Calu3 (cell line): ENCODE measurements at regions of chr13 and their contacts with region 1.

Region 1: GRCh38 chr13:48580185-48580803 is 47.4 kb upstream of the RCBTB2 start:
- DNase-seq: peak; percentile 60
- H3K4me3 Mint-ChIP-seq: no peak overlapping the region
- H3K27ac Mint-ChIP-seq: no peak overlapping the region
- H3K4me1 Mint-ChIP-seq: peaks cover 33% of the 10 kb centered on the region
- H3K27me3 Mint-ChIP-seq: no peaks in the 10 kb centered on the region
- CTCF ChIP-seq: peak; percentile 33

Region 2: GRCh38 chr13:48233046-48233907 is 347.0 kb before region 1 on chr13 and contains the start of gene ITM2B:
- CTCF ChIA-PET with region 1: interaction called, 4 read pairs
- intact Hi-C with region 1: loop called (anchors 10 kb)
- DNase-seq: peak; percentile 58
- H3K4me3 Mint-ChIP-seq: peak within 1 kb of the TSS; percentile 74
- H3K27ac Mint-ChIP-seq: peak within 1 kb of the TSS; percentile 84
- H3K4me1 Mint-ChIP-seq: peaks cover 38% of the 10 kb centered on the region
- H3K27me3 Mint-ChIP-seq: no peaks in the 10 kb centered on the region
- CTCF ChIP-seq: peak; percentile 22
- total RNA-seq, gene ITM2B: 357 and 362 TPM in 2 replicates

Region 3: DNA sequence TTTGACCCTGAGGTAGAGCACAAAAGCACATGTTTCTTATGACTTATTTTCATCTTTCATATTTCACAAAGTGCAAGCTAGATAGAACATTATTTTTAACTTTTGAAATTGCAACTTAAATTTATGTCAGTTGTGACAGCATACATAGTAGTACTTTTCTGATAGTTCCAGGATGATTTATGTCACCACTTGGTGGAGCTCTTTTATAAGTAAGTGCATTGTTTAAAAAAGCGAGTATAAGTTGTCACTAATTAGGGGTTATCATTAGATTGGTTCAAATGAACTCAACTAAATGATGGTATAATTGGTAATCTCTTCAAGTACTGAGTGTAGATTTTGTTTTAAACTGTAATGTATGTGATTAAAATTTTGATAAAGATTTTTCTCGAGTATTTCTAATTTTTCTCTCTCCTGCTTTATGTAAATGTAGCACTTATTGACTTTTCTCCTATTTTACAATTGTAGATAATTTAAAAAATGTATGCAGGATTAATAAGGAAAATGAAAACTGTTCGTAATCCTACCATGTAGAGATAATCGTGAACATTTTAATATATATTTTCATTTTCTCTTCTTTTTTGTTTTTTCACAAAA is 245.7 kb before region 1 on chr13:
- CTCF ChIA-PET with region 1: interaction called, 14 read pairs
- intact Hi-C with region 1: loop called (anchors 1 kb)
- DNase-seq: no peak
- H3K4me3 Mint-ChIP-seq: no peak overlapping the region
- H3K27ac Mint-ChIP-seq: no peak overlapping the region
- H3K4me1 Mint-ChIP-seq: peaks cover 15% of the 10 kb centered on the region
- H3K27me3 Mint-ChIP-seq: no peaks in the 10 kb centered on the region
- CTCF ChIP-seq: no peak

Region 4: GRCh38 chr13:48412881-48413351 is 167.4 kb before region 1 on chr13 and contains the start of gene LPAR6:
- CTCF ChIA-PET with region 1: no interaction called
- intact Hi-C with region 1: loop called (anchors 2 kb)
- DNase-seq: peak; percentile 22
- H3K4me3 Mint-ChIP-seq: peak within 1 kb of the TSS; percentile 75
- H3K27ac Mint-ChIP-seq: peak within 1 kb of the TSS; percentile 86
- H3K4me1 Mint-ChIP-seq: no peaks in the 10 kb centered on the region
- H3K27me3 Mint-ChIP-seq: no peaks in the 10 kb centered on the region
- CTCF ChIP-seq: no peak
- total RNA-seq, gene LPAR6: 16.4 TPM in 2 replicates

Region 5: DNA sequence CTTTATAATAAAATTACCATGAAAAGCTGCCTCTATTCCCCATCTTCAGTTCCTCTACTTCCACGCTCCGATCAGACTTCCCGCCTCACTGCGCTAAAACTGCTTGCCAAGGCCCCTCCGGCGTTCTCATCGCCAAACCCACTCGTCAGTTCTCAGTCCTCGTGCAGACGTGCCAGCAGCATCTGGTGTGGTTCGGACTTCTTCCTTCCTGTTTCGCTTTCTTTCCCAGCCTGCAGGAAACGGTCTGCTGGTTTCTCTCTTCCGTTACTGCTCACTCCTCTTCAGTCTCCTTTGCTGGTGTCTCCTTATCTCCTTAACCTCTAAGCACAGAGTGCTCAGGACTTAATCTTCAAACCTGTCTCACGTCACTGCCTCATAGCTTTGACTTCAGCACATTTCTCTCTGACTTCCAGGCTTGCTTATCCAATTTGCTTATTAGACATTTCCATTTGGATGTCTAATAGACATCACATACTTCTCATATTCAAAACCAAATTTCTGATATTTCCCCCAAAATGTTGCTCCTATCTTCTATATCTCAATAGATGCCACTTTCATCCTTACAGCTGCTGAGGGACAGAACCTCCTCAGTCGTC is 87.7 kb before region 1 on chr13:
- CTCF ChIA-PET with region 1: no interaction called
- intact Hi-C with region 1: loop called (anchors 5 kb)
- DNase-seq: no peak
- H3K4me3 Mint-ChIP-seq: no peak overlapping the region
- H3K27ac Mint-ChIP-seq: no peak overlapping the region
- H3K4me1 Mint-ChIP-seq: no peaks in the 10 kb centered on the region
- H3K27me3 Mint-ChIP-seq: no peaks in the 10 kb centered on the region
- CTCF ChIP-seq: no peak

Region 6: GRCh38 chr13:48923376-48923775 is 343.1 kb after region 1 on chr13:
- CTCF ChIA-PET with region 1: no interaction called
- intact Hi-C with region 1: no loop called
- DNase-seq: no peak
- H3K4me3 Mint-ChIP-seq: no peak overlapping the region
- H3K27ac Mint-ChIP-seq: no peak overlapping the region
- H3K4me1 Mint-ChIP-seq: peaks cover 2% of the 10 kb centered on the region
- H3K27me3 Mint-ChIP-seq: no peaks in the 10 kb centered on the region
- CTCF ChIP-seq: no peak